Prostate gland (tissue), 2 donors: ENCODE measurements at regions of chr17 and their contacts with region 1.

Region 1: DNA sequence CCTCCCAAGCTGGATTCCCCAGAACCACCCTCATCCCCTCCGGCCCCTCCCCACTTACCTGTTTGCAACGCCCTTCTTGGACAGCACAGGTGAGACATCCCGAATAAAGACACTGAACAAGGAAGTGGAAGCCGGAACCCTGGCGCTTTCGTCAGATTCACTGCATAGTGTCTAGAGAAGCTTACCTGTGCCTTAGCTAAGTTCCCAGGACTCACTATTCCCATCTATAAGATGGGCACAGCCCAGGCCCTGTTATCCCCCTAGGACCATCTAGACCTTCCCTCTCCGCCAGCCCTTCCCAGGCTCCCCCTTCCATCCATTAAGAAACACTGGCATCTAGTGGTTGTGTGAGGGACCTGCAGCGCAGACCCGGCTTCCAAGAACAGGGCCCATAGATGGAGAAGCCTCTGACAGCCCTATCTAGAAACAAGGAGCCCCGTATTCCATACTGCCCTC is 26.9 kb upstream of the RPL38 start:
- DNase-seq: peak; percentile 32
- H3K4me3 ChIP-seq: no peak overlapping the region
- H3K27ac ChIP-seq: no peak overlapping the region
- H3K4me1 ChIP-seq: no peaks in the 10 kb centered on the region
- H3K27me3 ChIP-seq: no peaks in the 10 kb centered on the region
- CTCF ChIP-seq: peak; percentile 21 to 82 (median 68)
- POLR2A ChIP-seq: no peak

Region 2: GRCh38 chr17:73429440-73430164 is 747.0 kb before region 1 on chr17:
- intact Hi-C with region 1: loop called (anchors 1 kb)
- DNase-seq: peak; percentile 90
- H3K4me3 ChIP-seq: no peak overlapping the region
- H3K27ac ChIP-seq: peak overlapping the region in 1 of 2 donors; percentile 1
- H3K4me1 ChIP-seq: peaks cover 9% of the 10 kb centered on the region
- H3K27me3 ChIP-seq: no peaks in the 10 kb centered on the region
- CTCF ChIP-seq: peak; percentile 92 to 98 (median 97)
- POLR2A ChIP-seq: no peak

Region 3: DNA sequence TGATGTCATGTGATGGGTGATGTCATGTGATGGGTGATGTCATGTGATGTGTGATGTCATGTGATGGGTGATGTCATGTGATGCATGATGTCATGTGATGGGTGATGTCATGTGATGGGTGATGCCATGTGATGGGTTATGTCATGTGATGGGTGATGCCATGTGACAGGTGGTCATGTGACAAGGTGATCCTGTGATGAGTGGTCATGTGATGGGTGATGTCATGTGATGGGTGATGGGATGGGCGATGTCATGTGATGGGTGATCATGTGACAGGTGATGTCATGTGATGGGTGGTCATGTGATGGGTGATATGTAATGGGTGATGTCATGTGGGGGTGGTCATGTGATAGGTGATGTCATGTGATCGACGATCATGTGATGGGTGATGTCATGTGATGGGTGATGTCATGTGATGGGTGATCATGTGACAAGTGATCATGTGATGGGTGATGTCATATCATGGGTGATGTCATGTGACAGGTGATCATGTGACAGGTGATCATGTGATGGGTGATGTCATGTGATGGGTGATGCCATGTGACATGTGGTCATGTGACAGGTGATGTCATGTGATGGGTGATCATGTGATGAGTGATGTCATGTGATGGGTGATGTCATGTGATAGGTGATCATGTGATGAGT is 337.5 kb after region 1 on chr17:
- intact Hi-C with region 1: no loop called
- DNase-seq: no peak
- H3K4me3 ChIP-seq: no peak overlapping the region
- H3K27ac ChIP-seq: no peak overlapping the region
- H3K4me1 ChIP-seq: no peaks in the 10 kb centered on the region
- H3K27me3 ChIP-seq: no peaks in the 10 kb centered on the region
- CTCF ChIP-seq: no peak
- POLR2A ChIP-seq: no peak